ENCODE measurements at regions of chr4 and their contacts with region 1.

Region 1: DNA sequence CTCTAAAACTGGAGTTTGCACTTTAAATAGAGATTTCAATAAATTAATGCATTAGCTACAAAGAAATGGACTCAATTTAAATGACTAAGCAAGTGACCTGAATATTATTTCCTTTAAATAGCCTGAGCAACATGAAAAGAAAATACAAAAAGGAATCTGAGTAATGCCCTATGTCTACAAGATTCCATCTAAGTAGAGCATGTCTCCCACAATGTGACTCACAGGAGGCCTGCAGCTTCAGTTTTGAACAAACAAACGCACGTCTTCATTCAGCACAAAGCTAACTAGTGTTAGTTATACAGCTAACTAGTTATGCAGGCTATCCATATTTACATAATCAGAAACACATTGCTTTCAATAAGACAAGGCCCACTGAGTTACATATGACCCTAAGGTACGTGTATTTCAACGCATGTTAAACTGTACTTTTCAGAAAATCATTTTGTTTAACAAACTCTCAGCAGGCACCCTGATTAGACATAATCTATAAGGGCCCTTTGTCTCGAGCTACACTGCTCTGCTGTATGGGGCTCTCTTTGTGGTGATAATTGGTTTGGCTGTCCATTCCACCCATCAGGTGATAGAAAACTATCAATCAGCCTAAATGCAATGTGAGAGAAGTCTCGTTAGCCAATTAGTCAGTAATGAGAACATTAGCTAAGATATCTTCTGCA is 116.5 kb downstream of the MAML3 start:
- DNase-seq: peak; percentile 68 to 80
- H3K4me3 ChIP-seq: no peak overlapping the region
- H3K4me3 Mint-ChIP-seq: peak overlapping the region; percentile 8
- H3K27ac Mint-ChIP-seq: peak overlapping the region; percentile 16
- H3K4me1 ChIP-seq: peaks cover 44% of the 10 kb centered on the region
- H3K4me1 Mint-ChIP-seq: peaks cover 44% of the 10 kb centered on the region
- H3K27me3 ChIP-seq: no peaks in the 10 kb centered on the region
- H3K27me3 Mint-ChIP-seq: no peaks in the 10 kb centered on the region
- CTCF ChIP-seq: no peak

Region 2: GRCh38 chr4:140018931-140019618 is 18.4 kb before region 1 on chr4:
- CTCF ChIA-PET with region 1: interaction called, 7 read pairs
- POLR2A ChIA-PET with region 1: interaction called, 6 read pairs
- intact Hi-C with region 1: loop called (anchors 1 kb)
- DNase-seq: peak; percentile 44 to 52
- H3K4me3 ChIP-seq: no peak overlapping the region
- H3K4me3 Mint-ChIP-seq: peak overlapping the region; percentile 60
- H3K27ac Mint-ChIP-seq: peak overlapping the region; percentile 66
- H3K4me1 ChIP-seq: peaks cover 50% of the 10 kb centered on the region
- H3K4me1 Mint-ChIP-seq: peaks cover 54% of the 10 kb centered on the region
- H3K27me3 ChIP-seq: no peaks in the 10 kb centered on the region
- H3K27me3 Mint-ChIP-seq: no peaks in the 10 kb centered on the region
- CTCF ChIP-seq: no peak